ENCODE measurements at regions of chr21 and their contacts with region 1.

Region 1: GRCh38 chr21:45140346-45140940 is 66.1 kb downstream of the ADARB1 start:
- DNase-seq: peak; percentile 77
- H3K4me3 ChIP-seq: no peak overlapping the region
- H3K27ac ChIP-seq: no peak overlapping the region
- H3K4me1 ChIP-seq: peaks cover 0 to 15% (median 5%) of the 10 kb centered on the region in 4 donors
- H3K27me3 ChIP-seq: no peaks in the 10 kb centered on the region
- CTCF ChIP-seq: peak; percentile 58 to 91 (median 70)
- EP300 ChIP-seq: no peak
- POLR2A ChIP-seq: no peak

Region 2: DNA sequence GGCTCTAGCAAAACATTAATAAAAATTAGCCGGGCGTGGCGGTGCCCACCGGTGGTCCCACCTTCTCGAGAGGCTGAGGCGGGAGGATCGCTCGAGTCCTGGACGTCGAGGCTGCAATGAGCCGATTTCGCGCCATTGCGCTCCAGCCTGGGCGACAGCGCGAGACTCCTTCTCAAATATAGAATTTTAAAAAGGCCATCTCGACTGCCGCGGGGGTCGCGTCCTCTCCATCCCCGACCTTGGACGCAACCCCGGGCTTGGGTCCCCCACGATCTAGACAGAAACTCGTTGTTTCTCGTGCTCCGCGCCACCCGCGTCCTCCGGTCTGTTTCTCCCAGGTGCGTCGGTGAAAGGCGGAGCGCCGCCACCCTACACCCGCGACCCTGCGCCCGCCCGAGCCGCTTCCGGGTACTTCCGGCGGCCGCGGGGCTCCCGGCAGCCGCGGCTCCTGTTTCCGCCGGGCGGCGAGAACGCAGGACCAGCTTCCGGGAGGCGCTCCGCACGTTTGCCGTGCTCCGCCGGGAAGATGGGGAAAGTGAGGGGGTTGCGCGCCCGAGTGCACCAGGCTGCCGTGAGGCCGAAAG is 200.8 kb before region 1 on chr21 and contains the start of gene SLX9:
- in situ Hi-C with region 1: loop called in 1 of 4 experiments (anchors 5 kb)
- intact Hi-C with region 1: no loop called
- DNase-seq: peak; percentile 83
- H3K4me3 ChIP-seq: peak within 1 kb of the TSS; percentile 87 to 100 (median 99)
- H3K27ac ChIP-seq: peak within 1 kb of the TSS; percentile 77 to 85 (median 80)
- H3K4me1 ChIP-seq: peaks cover 14 to 33% (median 22%) of the 10 kb centered on the region in 4 donors
- H3K27me3 ChIP-seq: peaks cover under 1% of the 10 kb centered on the region
- CTCF ChIP-seq: no peak
- EP300 ChIP-seq: no peak
- POLR2A ChIP-seq: peak; percentile 62
- total RNA-seq, gene SLX9: 8.1 to 46.0 (median 16.6) TPM

Region 3: GRCh38 chr21:44949779-44950198 is 190.7 kb before region 1 on chr21:
- in situ Hi-C with region 1: loop called in 3 of 4 experiments (anchors 5 to 10 kb)
- intact Hi-C with region 1: no loop called
- DNase-seq: peak; percentile 90
- H3K4me3 ChIP-seq: no peak overlapping the region
- H3K27ac ChIP-seq: peak overlapping the region in 1 of 4 donors; percentile 39
- H3K4me1 ChIP-seq: peaks cover 0 to 17% (median 11%) of the 10 kb centered on the region in 4 donors
- H3K27me3 ChIP-seq: no peaks in the 10 kb centered on the region
- CTCF ChIP-seq: peak; percentile 85 to 96 (median 93)
- EP300 ChIP-seq: no peak
- POLR2A ChIP-seq: no peak

Region 4: GRCh38 chr21:45248893-45249381 is 108.5 kb after region 1 on chr21:
- in situ Hi-C with region 1: no loop called
- intact Hi-C with region 1: no loop called
- DNase-seq: peak; percentile 32
- H3K4me3 ChIP-seq: peak overlapping the region in 2 of 4 donors; percentile 5 to 30
- H3K27ac ChIP-seq: peak overlapping the region in 2 of 4 donors; percentile 50 to 65
- H3K4me1 ChIP-seq: peaks cover 0 to 9% (median 5%) of the 10 kb centered on the region in 4 donors
- H3K27me3 ChIP-seq: peaks cover 17% of the 10 kb centered on the region
- CTCF ChIP-seq: no peak
- EP300 ChIP-seq: no peak
- POLR2A ChIP-seq: no peak

Region 5: GRCh38 chr21:45388011-45388521 is 247.6 kb after region 1 on chr21:
- in situ Hi-C with region 1: no loop called
- intact Hi-C with region 1: no loop called
- DNase-seq: no peak
- H3K4me3 ChIP-seq: no peak overlapping the region
- H3K27ac ChIP-seq: no peak overlapping the region
- H3K4me1 ChIP-seq: peaks cover 0 to 7% (median 6%) of the 10 kb centered on the region in 4 donors
- H3K27me3 ChIP-seq: no peaks in the 10 kb centered on the region
- CTCF ChIP-seq: no peak
- EP300 ChIP-seq: no peak
- POLR2A ChIP-seq: no peak

Region 6: GRCh38 chr21:45439161-45439872 is 298.9 kb after region 1 on chr21:
- in situ Hi-C with region 1: loop called in 2 of 4 experiments (anchors 10 to 25 kb)
- intact Hi-C with region 1: no loop called
- DNase-seq: peak; percentile 83
- H3K4me3 ChIP-seq: peak overlapping the region in 2 of 4 donors; percentile 19 to 41
- H3K27ac ChIP-seq: peak overlapping the region; percentile 65 to 73 (median 70)
- H3K4me1 ChIP-seq: peaks cover 0 to 13% (median 8%) of the 10 kb centered on the region in 4 donors
- H3K27me3 ChIP-seq: no peaks in the 10 kb centered on the region
- CTCF ChIP-seq: peak; percentile 97 to 98 (median 98)
- EP300 ChIP-seq: peak; percentile 63
- POLR2A ChIP-seq: no peak